A549 (cell line): ENCODE measurements at regions of chrX and their contacts with region 1.

Region 1: DNA sequence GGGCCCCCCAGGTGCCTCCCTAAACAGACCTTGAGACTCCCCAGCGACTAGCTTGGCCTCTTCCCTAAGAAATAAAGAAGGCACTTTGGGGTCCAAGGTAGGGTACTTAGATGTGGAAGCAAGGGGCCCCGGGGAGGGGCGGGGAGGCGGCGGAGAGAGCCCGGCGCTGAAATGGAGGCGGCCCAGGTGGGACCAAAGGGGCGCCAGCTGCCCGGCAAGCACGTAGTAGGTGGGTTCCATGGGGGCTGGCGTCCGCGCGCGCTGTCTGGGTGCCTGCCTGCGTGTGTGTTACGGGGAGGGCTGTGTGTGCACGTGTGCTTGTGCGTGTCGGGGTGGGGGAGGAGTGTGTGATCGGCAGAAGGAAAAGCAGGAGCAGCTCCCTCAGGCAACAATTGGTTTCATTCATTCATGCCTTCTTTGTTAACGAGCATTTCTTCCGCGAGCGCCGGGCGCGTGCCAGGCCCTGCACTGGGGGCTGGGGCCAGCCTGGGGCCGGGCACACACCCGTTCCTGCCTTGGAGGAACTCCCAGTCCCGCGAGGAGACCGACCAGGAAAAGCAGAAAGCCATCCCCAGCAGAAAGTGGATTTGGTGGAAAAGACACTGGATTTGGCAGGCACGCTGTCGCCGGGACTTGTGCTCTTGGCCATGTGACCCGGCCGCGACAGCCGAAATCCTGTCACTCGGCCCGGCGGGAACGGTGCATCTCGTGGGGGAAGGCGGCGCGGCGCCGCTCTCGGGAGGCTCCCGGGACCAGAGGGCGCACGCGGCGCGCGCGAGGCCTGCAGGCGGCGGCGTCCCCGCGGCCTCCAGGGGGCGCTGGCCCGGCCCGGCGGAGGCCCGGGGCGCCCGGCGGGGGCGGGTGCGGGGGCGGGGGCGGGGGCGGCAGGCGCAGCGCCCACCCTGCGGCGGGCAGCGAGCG is 3.3 kb upstream of the DUSP9 start:
- DNase-seq: peak; percentile 43 to 44
- ATAC-seq: peak; percentile 58 to 61; a peak in 5 of 6 replicates
- H3K4me3 ChIP-seq: peak overlapping the region; percentile 59
- H3K27ac ChIP-seq: peak overlapping the region; percentile 65 to 88
- H3K4me1 ChIP-seq: peaks cover 31% of the 10 kb centered on the region; the same call in 2 of the 3 replicates
- CTCF ChIP-seq: peak; percentile 58
- EP300 ChIP-seq: no peak
- POLR2A ChIP-seq: no peak
- RAD21 ChIP-seq: no peak

Region 2: GRCh38 chrX:153547195-153547594 is 96.5 kb before region 1 on chrX:
- CTCF ChIA-PET with region 1: no interaction called
- POLR2A ChIA-PET with region 1: no interaction called
- DNase-seq: no peak
- ATAC-seq: no peak; a peak in 1 of 6 replicates
- H3K4me3 ChIP-seq: no peak overlapping the region
- H3K27ac ChIP-seq: no peak overlapping the region
- H3K4me1 ChIP-seq: no peaks in the 10 kb centered on the region
- CTCF ChIP-seq: no peak
- EP300 ChIP-seq: no peak
- POLR2A ChIP-seq: no peak
- RAD21 ChIP-seq: no peak

Region 3: DNA sequence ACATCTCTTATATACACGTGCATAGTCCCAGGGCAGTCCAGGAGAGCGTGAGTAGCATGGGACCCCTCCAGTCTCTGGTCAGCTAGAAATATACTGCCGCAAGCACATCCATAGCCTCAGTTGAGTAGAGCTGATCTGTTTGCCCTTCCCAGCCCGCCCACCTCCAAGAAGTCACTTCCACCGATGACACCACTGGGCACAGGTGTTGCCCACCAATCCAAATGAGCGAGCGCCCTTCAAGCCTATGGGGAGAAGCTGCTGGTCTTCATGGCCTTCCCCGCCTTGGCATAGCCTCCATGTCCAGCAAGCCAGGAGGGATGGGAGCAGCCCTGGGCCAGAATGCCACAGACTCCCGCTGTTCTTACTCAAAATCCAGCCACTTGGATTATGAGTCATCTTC is 13.5 kb after region 1 on chrX:
- CTCF ChIA-PET with region 1: interaction called, 48 read pairs
- POLR2A ChIA-PET with region 1: no interaction called
- DNase-seq: no peak
- ATAC-seq: no peak
- H3K4me3 ChIP-seq: no peak overlapping the region
- H3K27ac ChIP-seq: no peak overlapping the region
- H3K4me1 ChIP-seq: no peaks in the 10 kb centered on the region
- CTCF ChIP-seq: no peak
- EP300 ChIP-seq: no peak
- POLR2A ChIP-seq: no peak
- RAD21 ChIP-seq: no peak

Region 4: DNA sequence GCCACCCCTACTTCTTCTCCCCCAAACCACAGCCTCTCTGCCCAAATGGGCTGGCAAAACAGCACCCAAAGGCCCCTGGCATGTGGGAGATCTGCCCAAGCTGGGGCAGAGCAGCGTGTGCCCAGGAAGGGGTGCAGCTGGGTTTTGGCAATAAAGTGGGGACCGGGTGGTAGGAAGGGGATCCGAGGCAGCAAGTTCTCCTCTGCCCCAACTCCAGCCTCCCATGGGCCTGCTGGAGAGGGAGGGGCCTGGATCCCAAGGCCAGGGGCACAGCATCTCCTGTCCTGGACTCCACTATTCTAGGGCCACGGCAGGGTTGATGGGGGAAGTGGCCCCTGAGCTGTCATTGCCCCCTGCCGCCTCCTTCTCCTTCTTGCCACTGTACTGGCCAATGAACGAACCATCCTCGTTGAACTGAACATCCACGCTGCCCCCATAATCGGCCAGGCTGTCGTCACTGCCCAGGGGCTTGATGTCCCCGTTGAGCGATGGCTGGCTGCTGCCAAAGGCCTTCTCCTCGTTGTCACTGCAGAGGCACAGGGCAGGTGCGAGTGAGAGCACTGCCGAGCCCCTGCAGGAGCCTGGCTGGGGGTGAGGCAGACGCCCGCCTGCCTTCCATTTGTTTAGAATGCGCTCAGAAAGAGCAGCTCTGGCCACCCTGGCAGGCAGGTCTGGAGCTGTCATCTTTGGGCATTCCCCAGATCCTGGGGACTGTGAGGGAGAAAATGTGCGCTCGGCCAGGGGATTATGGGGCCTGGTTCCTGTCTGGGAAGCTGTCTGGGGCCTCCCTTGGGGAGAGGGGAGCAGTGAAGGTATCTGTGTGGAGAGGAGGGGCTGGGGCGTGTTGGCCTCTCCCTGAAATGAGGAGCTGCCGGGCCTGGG is 218.9 kb after region 1 on chrX:
- CTCF ChIA-PET with region 1: no interaction called
- POLR2A ChIA-PET with region 1: no interaction called
- DNase-seq: no peak
- ATAC-seq: no peak
- H3K4me3 ChIP-seq: no peak overlapping the region
- H3K27ac ChIP-seq: no peak overlapping the region
- H3K4me1 ChIP-seq: no peaks in the 10 kb centered on the region
- CTCF ChIP-seq: no peak
- EP300 ChIP-seq: no peak
- POLR2A ChIP-seq: no peak
- RAD21 ChIP-seq: no peak